ENCODE measurements at regions of chr6 and their contacts with region 1.

Region 1: GRCh38 chr6:166167801-166168615 is at the start of gene TBXT:
- DNase-seq: no peak
- ATAC-seq: no peak
- H3K4me3 Mint-ChIP-seq: peak within 1 kb of the TSS; percentile 84
- H3K27ac Mint-ChIP-seq: no peak within 1 kb of the TSS
- H3K4me1 Mint-ChIP-seq: peaks cover 24% of the 10 kb centered on the region
- H3K27me3 Mint-ChIP-seq: peaks cover 58% of the 10 kb centered on the region
- CTCF ChIP-seq: no peak
- total RNA-seq, gene TBXT: 0.10 and 0.24 TPM in 2 replicates

Region 2: GRCh38 chr6:166192136-166192535 is 24.1 kb after region 1 on chr6:
- CTCF ChIA-PET with region 1: no interaction called
- POLR2A ChIA-PET with region 1: no interaction called
- intact Hi-C with region 1: no loop called
- DNase-seq: no peak
- ATAC-seq: no peak
- H3K4me3 Mint-ChIP-seq: no peak overlapping the region
- H3K27ac Mint-ChIP-seq: no peak overlapping the region
- H3K4me1 Mint-ChIP-seq: peaks cover 10% of the 10 kb centered on the region
- H3K27me3 Mint-ChIP-seq: peaks cover 2% of the 10 kb centered on the region
- CTCF ChIP-seq: no peak

Region 3: DNA sequence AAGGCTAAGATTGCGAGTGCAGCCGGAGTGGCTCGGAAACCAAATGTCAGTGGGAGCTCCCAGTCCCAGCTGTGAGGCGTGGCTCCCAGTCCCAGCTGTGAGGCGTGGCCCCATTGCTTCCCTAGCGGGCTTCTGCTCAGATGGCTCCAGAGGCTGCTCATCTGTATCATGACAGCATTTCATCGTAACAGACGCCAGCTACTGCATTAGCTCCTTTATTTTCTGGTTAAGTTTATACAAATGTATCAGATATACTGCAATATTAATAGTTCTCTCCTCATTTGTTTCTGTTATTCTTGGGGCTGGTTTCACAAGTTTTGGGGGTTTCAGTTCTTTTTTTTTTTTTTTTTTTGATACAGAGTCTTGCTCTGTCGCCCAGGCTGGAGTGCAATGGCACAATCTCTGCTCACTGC is 34.3 kb after region 1 on chr6:
- CTCF ChIA-PET with region 1: no interaction called
- POLR2A ChIA-PET with region 1: no interaction called
- intact Hi-C with region 1: loop called (anchors 5 kb)
- DNase-seq: peak; percentile 42
- ATAC-seq: peak; percentile 84
- H3K4me3 Mint-ChIP-seq: peak overlapping the region; percentile 68
- H3K27ac Mint-ChIP-seq: peak overlapping the region; percentile 85
- H3K4me1 Mint-ChIP-seq: peaks cover 49% of the 10 kb centered on the region
- H3K27me3 Mint-ChIP-seq: no peaks in the 10 kb centered on the region
- CTCF ChIP-seq: no peak

Region 4: DNA sequence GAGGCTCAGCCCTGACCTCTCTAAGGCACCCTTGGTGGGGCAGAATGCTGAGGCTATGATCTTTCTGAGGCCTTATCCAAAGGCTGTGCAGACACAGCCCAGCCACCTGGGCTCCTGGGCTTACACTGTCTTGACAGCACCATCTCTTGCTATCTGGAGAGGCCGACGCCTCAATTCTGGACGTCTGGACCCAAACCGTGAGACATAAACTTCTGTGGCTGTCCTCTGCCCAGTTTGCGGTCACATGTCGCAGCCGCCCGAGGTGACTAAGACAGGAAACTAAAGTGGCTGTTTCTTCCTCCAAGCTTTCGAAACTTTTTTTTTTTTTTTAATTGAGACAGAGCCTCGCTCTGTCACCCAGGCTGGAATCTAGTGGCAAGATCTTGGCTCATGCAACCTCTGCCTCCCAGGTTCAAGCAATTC is 90.9 kb after region 1 on chr6:
- CTCF ChIA-PET with region 1: no interaction called
- POLR2A ChIA-PET with region 1: no interaction called
- intact Hi-C with region 1: loop called (anchors 10 kb)
- DNase-seq: no peak
- ATAC-seq: peak; percentile 42
- H3K4me3 Mint-ChIP-seq: peak overlapping the region; percentile 50
- H3K27ac Mint-ChIP-seq: no peak overlapping the region
- H3K4me1 Mint-ChIP-seq: peaks cover 21% of the 10 kb centered on the region
- H3K27me3 Mint-ChIP-seq: peaks cover 8% of the 10 kb centered on the region
- CTCF ChIP-seq: no peak

Measured in activated B cell treated with CpG ODN at 0.5 μM for 24 hours (primary cell).